MCF 10A (cell line): ENCODE measurements at regions of chrX and their contacts with region 1.

Region 1: DNA sequence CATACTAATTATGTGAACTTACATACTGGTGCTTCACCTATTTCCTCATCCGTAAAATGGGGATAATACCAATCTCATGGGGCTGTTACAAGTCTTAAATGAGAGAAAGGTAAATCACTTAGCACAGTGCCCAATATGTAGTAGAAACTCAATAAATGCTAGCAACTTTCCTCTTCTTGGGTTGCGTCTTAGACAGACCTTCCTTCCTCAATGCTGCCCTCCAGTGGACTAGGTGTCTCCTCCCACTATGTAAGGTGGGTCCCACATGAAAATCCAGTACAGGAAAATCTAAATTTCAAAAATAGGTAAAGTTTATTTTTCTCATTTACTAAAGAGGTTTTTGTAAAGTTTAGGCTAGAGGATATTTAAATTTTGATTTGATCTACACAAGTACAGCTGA is 20.6 kb downstream of the ZDHHC9 start:
- DNase-seq: peak; percentile 63
- H3K4me3 Mint-ChIP-seq: no peak overlapping the region
- H3K27ac Mint-ChIP-seq: no peak overlapping the region
- H3K4me1 Mint-ChIP-seq: no peaks in the 10 kb centered on the region
- H3K27me3 Mint-ChIP-seq: no peaks in the 10 kb centered on the region
- CTCF ChIP-seq: peak; percentile 37

Region 2: DNA sequence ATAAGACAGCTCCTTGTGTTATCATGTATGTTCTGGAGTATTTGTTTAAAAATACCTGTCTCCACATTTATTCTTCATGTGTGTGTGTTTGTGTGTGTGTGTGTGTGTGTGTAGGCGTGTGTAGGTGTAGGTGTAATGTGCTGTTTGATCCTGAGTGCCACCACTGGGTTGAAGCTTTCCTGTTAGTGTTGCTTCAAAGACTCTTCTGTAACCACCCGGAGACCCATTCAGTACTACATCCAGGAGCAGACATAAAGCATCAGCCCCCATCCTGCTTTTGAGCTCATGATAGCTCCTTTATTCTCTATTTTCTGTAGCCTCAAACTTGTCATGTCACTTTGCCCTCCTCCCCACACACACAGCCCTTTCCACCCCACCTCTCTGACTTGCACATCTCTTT is 23.6 kb after region 1 on chrX:
- CTCF ChIA-PET with region 1: no interaction called
- POLR2A ChIA-PET with region 1: no interaction called
- intact Hi-C with region 1: no loop called
- DNase-seq: no peak
- H3K4me3 Mint-ChIP-seq: no peak overlapping the region
- H3K27ac Mint-ChIP-seq: no peak overlapping the region
- H3K4me1 Mint-ChIP-seq: no peaks in the 10 kb centered on the region
- H3K27me3 Mint-ChIP-seq: peaks cover 12% of the 10 kb centered on the region
- CTCF ChIP-seq: no peak

Region 3: DNA sequence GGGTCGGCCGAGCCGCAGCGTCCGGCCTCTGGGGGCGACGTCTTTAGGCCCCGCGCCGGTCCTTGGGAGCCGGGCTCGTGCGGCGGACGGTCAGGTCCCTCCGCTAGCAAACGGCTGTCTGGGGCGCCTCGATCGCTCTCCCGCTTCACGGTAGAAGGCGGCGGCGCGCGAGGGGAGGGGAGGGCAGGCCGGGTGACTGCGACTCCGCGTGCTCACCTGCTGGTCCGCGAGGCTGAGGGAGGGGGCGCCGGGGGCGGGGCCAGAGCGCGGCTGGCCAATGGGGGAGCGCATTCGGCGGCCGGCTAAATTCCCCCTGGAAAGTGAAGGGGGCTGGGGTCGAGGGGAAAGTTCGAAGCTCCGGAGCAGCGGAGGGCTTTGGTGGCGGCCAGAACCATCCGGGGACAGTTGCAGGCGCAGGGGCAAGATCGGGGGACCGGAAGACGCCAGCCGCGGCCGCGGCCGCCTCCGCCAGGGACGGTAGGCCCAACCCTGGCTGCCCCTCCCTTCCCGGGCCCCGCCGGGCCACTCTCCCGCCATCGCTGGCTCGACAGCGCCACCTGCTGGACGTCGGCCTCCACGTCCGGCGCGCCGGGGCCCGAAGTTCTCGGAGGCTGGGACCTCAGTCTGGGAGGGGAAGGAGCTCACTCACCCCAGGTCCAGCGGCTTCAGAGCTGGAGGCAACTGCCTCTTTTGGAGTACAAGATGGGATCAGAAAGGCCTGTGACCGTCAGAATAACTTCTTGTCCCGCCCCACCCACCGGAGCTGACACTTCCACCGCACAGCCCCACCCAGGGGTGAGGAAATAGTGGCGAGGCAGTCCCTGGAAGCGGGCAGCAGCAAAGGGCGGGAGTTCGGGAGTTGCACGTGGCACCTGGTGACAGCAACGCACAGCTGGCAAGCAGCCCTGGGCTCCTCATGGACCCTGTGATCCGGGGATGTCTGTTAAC is 237.3 kb after region 1 on chrX:
- CTCF ChIA-PET with region 1: interaction called, 3 read pairs
- POLR2A ChIA-PET with region 1: no interaction called
- intact Hi-C with region 1: loop called (anchors 5 kb)
- DNase-seq: peak; percentile 67
- H3K4me3 Mint-ChIP-seq: peak overlapping the region; percentile 65
- H3K27ac Mint-ChIP-seq: peak overlapping the region; percentile 85
- H3K4me1 Mint-ChIP-seq: no peaks in the 10 kb centered on the region
- H3K27me3 Mint-ChIP-seq: peaks cover 26% of the 10 kb centered on the region
- CTCF ChIP-seq: peak; percentile 78